ENCODE measurements at regions of chr19 and their contacts with region 1.

Region 1: GRCh38 chr19:42108527-42109389 is 23.5 kb downstream of the POU2F2 start:
- ATAC-seq: peak; percentile 68 to 98 (median 93)
- H3K4me3 ChIP-seq: peak overlapping the region in 1 of 5 donors; percentile 7
- H3K27ac ChIP-seq: no peak overlapping the region
- H3K4me1 ChIP-seq: peaks cover 3 to 7% of the 10 kb centered on the region in 2 donors

Region 2: DNA sequence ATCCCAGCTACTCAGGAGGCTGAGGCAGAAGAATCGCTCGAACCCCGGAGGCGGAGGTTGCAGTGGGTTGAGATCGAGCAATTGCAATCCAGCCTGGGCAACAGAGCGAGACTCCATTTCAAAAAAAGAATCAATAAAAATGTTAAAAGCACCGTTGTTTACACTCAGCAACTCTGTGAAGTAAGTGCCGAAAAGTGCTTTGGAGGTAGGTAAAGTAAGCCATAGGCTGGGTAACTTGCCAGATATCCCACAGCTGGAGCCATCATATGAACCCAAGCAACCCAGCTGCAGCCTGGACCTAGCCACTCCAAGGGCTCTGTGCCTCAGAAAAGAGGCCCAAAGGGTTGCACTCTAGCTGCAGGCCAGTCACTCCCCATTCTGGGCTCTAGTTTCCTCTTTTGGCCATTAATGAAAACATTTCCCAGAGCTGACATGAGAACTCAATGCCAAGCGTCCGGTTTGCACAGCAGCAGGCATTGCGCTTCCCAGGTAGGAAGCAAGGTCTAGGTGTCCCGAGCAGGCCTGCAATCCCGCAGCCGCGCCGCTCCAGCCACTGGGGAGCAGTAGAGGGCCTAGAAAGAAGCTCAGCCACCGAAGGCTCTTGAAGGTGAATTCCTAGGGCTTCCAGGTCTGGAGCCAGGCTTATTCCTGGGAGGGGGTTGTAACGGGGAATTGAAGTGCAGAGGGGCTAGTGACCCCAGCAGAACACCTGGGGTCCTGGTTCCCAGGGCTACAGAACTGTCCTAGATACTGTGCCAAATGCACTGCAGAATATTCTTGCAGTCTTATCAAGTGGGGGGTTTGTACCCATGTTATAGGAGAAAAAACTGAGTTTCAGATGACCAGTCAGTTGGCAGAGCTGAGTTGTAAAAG is 235.7 kb before region 1 on chr19:
- in situ Hi-C with region 1: no loop called
- ATAC-seq: peak; percentile 37 to 69 (median 52)
- H3K4me3 ChIP-seq: no peak overlapping the region
- H3K27ac ChIP-seq: no peak overlapping the region
- H3K4me1 ChIP-seq: no peaks in the 10 kb centered on the region

Region 3: DNA sequence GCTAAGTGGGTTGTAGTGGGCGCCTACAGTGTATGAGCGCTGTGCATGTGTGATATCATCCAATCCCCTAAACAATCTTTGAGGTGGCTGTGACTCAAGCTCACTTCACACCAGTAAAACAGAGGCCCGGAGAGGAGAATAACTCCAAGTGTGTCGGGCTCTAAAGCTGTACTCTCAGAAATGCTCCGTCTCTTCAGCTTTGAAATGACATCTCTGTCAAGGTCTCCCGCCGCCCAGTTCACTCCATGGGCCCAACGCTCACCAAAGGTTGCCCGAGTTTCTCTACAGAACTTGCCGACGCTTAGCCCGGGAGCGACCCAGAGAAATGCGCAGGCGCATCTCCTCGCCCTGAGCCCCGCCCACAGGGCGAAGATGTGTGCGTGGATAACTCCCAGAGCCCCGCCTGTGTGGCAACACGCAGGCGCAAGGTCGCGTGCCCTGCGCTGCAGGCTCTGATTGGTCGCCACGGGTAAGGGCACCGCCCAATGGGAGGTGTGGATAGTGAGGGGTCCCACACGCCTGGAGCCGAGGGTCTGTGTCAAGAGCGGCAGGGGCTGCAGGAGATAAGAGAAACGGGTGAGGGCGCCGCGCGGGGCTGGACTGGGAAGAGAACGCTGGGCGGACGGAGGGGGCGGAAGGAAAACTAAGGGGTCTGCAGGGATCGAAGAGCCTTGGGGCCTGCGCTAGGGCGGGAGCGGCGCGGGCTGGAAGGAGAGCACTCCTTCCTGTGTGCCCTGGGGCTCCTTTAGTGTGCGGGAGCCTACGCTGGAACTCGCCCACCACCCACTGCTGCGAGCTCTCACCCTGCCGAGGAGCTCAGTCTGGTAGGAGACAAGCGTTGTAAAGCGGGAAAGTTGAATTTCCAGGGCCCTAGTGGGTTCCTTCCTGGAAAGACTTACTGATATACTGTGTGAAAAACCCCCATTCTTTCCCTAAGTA is 111.3 kb after region 1 on chr19 and contains the start of gene ZNF526:
- in situ Hi-C with region 1: loop called in 2 of 9 experiments (anchors 25 kb)
- ATAC-seq: peak; percentile 76 to 89 (median 83)
- H3K4me3 ChIP-seq: peak within 1 kb of the TSS; percentile 52 to 88 (median 69)
- H3K27ac ChIP-seq: peak within 1 kb of the TSS; percentile 72 to 80
- H3K4me1 ChIP-seq: peaks cover 22% of the 10 kb centered on the region in 2 donors
- total RNA-seq, gene ZNF526: 5.1 to 14.1 (median 8.0) TPM

Region 4: DNA sequence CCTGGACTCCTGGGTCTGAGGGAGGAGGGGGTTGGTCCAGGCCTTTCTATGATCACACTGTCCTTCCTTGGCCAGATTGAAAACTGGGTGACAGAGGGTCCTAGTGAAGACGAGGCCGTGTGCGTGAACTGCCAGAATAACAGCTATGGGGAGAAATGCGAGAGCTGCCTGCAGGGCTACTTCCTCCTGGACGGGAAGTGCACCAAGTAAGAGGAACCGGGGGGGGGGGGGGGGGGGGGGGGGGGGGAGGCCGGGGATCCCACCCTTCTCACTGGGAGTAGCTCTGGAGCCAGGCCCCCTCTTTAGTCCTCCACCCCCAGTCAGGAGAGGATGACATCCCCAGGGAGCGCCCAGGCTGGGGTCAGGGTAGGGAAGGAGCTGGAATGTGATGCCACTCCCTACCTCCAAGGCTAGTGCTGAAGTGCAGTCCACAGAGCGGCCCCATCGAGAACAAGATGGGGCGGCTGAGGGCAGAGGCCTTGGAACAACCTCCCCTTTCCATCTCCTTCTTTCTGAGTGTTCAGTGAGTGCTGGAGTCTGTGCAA is 261.9 kb after region 1 on chr19:
- in situ Hi-C with region 1: no loop called
- ATAC-seq: peak in 2 of 8 experiments; percentile 14 to 18
- H3K4me3 ChIP-seq: no peak overlapping the region
- H3K27ac ChIP-seq: peak overlapping the region in 1 of 2 donors; percentile 14
- H3K4me1 ChIP-seq: peaks cover 4 to 8% of the 10 kb centered on the region in 2 donors